WTC11 (cell line): ENCODE measurements at regions of chr6 and their contacts with region 1.

Region 1: GRCh38 chr6:12504319-12504966 is 212.1 kb upstream of the PHACTR1 start:
- DNase-seq: peak; percentile 33
- ATAC-seq: peak; percentile 99
- H3K4me3 Mint-ChIP-seq: no peak overlapping the region
- H3K27ac Mint-ChIP-seq: no peak overlapping the region
- H3K4me1 Mint-ChIP-seq: peaks cover 4% of the 10 kb centered on the region
- H3K27me3 Mint-ChIP-seq: no peaks in the 10 kb centered on the region
- CTCF ChIP-seq: peak; percentile 65

Region 2: DNA sequence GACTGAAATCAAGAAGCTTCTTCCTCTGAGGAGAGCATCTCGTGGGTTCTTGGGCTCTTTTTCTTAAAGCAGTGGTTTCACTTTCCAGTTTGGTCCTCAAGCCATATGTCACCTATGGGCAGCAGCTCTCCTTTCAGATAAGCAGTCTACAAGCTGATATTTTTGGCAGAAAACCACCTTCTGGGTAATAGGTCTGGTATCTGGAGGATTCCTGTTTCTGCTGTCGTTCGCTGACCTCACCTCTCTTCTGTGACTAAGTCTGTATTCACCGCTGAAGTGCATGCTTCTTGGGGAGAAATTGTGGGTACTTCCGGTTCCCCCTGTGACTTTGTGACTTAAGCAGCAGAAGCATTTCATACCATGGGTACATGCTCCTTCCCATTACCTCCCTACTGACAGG is 20.7 kb before region 1 on chr6:
- CTCF ChIA-PET with region 1: interaction called, 15 read pairs
- POLR2A ChIA-PET with region 1: no interaction called
- DNase-seq: no peak
- ATAC-seq: no peak
- H3K4me3 Mint-ChIP-seq: no peak overlapping the region
- H3K27ac Mint-ChIP-seq: no peak overlapping the region
- H3K4me1 Mint-ChIP-seq: peaks cover 16% of the 10 kb centered on the region
- H3K27me3 Mint-ChIP-seq: no peaks in the 10 kb centered on the region
- CTCF ChIP-seq: no peak